BJ (cell line): ENCODE measurements at regions of chr7 and their contacts with region 1.

Region 1: GRCh38 chr7:113159746-113160339 is 41.5 kb upstream of the SMIM30 start:
- DNase-seq: no peak
- H3K4me3 ChIP-seq: no peak overlapping the region
- H3K27me3 ChIP-seq: no peaks in the 10 kb centered on the region
- CTCF ChIP-seq: peak; percentile 85

Region 2: GRCh38 chr7:113142385-113143119 is 17.3 kb before region 1 on chr7:
- CTCF ChIA-PET with region 1: interaction called, 20 read pairs
- POLR2A ChIA-PET with region 1: no interaction called
- DNase-seq: no peak
- H3K4me3 ChIP-seq: no peak overlapping the region
- H3K27me3 ChIP-seq: no peaks in the 10 kb centered on the region
- CTCF ChIP-seq: no peak

Region 3: GRCh38 chr7:113179313-113179712 is 19.5 kb after region 1 on chr7:
- CTCF ChIA-PET with region 1: interaction called, 12 read pairs
- POLR2A ChIA-PET with region 1: no interaction called
- DNase-seq: no peak
- H3K4me3 ChIP-seq: no peak overlapping the region
- H3K27me3 ChIP-seq: no peaks in the 10 kb centered on the region
- CTCF ChIP-seq: no peak

Region 4: DNA sequence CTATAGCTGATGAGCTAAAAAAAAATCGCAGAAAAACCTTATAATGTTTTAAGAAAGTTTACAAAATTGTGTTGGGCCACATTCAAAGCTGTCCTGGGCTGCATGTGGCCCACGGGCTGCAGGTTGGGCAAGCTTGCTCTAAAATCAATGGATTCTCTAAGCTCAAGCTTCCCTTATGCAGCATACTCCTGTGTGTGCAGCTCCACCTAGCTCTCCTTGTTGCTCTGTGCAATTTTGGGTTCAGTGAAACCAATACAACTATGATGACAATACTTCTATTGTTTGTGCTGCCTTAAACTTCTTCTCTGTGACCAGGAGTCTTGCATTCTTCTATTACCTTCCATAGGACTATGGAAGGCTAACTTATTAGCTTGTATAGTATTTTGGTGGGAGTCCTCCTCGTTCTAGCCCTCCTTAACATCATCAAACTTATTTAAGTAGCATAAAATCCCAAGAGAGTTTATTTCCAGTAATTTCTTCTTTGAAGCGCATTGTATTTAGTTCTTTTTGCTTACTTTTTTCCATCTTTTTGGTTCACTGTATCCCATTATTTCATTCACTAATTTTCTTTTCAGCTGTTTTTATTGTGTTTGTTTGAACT is 129.4 kb after region 1 on chr7:
- CTCF ChIA-PET with region 1: interaction called, 58 read pairs
- POLR2A ChIA-PET with region 1: no interaction called
- DNase-seq: no peak
- H3K4me3 ChIP-seq: no peak overlapping the region
- H3K27me3 ChIP-seq: no peaks in the 10 kb centered on the region
- CTCF ChIP-seq: peak; percentile 76

Region 5: DNA sequence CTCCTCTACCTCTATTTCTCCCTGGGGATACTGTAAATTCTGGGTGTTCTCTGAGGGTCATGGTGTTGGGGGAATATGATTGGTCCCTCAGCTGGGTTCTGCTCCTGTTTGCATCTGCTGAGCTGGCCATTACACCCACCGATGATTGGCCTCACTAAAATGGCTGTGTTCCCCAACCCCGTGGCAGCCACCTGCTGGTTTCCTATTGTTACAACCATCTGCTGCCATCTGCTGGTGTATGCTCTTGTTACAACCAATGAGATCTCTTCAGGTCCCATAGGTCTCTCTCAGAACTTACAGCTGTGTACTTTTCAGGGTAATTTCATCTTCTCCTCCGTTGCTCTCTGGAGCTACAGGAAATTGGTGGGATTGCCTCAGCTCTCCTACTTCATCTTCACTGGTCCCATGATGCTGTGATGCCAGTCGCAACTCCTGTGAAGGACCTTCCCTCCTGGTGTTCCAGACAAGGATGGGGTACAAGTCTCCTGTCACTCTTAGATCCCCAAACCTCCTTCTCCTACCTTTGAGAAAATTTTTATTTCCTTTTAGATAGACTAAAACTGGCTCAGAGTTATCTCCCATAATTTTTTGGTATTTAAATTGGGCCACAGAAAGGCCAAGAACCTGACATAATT is 262.0 kb after region 1 on chr7:
- CTCF ChIA-PET with region 1: interaction called, 18 read pairs
- POLR2A ChIA-PET with region 1: no interaction called
- DNase-seq: peak; percentile 3
- H3K4me3 ChIP-seq: no peak overlapping the region
- H3K27me3 ChIP-seq: no peaks in the 10 kb centered on the region; the same call in 1 of the 2 replicates
- CTCF ChIP-seq: peak; percentile 88